Pancreas (tissue), 10 donors: ENCODE measurements at regions of chr6 and their contacts with region 1.

Region 1: DNA sequence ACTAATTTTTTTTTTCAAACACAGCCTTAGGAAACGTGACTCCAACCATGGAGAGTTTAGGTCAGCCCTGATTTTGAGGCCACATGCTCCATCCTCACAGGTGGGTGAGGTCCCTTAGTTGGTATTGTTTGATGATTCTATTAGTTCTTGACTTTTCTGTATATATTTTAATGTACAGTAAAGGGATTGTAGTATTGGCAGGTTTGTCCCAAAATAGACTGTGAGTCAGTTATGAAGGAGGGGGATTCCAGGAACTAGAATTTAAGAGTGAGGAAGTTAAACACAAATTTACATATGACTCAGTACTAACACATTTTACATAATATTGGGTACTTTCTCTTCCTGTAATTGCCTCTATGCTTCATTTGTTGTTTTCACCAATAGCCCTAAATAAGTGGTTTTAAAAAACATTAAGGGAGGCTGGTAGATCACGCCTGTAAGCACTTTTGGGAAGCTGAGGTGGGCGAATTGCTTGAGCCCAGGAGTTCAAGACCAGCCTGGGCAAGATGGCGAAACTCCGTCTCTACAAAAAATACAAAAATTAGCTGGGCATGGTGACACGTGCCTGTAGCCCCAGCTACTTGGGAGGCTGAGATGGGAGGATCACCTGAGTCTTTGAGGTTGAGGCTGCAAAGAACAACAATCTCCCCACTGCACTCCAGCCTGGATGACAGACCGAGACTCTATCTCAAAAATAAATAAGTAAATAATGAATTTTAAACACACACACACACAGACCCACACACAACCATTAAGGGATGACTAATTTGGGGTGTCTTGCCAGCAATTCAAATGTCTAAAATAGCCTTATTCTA is 81.8 kb downstream of the SGK1 start:
- DNase-seq: no peak
- ATAC-seq: peak; percentile 45 to 85 (median 62)
- H3K4me3 ChIP-seq: no peak overlapping the region
- H3K27ac ChIP-seq: peak overlapping the region in 2 of 4 donors; percentile 81
- H3K4me1 ChIP-seq: peaks cover 17 to 41% (median 27%) of the 10 kb centered on the region in 3 donors
- H3K27me3 ChIP-seq: no peaks in the 10 kb centered on the region
- CTCF ChIP-seq: no peak

Region 2: DNA sequence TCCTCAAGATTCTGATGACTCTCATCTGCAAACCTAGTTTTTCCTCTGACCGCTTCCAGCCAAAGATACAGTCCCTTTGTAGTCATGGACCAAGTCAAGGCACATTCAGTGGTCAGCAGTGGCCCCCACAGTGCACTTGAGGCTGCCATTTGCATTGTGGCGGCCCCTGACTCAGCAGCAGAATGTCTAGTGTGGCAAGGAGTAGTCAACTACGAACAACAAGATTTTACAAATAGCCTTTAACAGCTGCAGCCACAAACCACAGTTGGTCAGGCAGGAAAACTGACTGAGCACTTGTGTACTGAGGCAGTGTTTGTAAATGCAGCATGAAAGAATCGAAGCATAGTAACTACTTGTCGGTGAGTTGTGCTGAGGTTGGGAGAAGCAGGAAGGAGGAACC is 233.3 kb before region 1 on chr6:
- intact Hi-C with region 1: no loop called
- DNase-seq: no peak
- ATAC-seq: peak in 1 of 4 donors; percentile 28
- H3K4me3 ChIP-seq: no peak overlapping the region
- H3K27ac ChIP-seq: no peak overlapping the region
- H3K4me1 ChIP-seq: no peaks in the 10 kb centered on the region
- H3K27me3 ChIP-seq: no peaks in the 10 kb centered on the region
- CTCF ChIP-seq: no peak

Region 3: GRCh38 chr6:134182528-134182927 is 53.6 kb before region 1 on chr6:
- intact Hi-C with region 1: loop called in 1 of 3 experiments (anchors 10 kb)
- DNase-seq: no peak
- ATAC-seq: no peak
- H3K4me3 ChIP-seq: no peak overlapping the region
- H3K27ac ChIP-seq: peak overlapping the region in 2 of 4 donors; percentile 31 to 44
- H3K4me1 ChIP-seq: peaks cover 6 to 11% (median 7%) of the 10 kb centered on the region in 3 donors
- H3K27me3 ChIP-seq: no peaks in the 10 kb centered on the region
- CTCF ChIP-seq: no peak